HEK293 (cell line): ENCODE measurements at regions of chr5 and their contacts with region 1.

Region 1: DNA sequence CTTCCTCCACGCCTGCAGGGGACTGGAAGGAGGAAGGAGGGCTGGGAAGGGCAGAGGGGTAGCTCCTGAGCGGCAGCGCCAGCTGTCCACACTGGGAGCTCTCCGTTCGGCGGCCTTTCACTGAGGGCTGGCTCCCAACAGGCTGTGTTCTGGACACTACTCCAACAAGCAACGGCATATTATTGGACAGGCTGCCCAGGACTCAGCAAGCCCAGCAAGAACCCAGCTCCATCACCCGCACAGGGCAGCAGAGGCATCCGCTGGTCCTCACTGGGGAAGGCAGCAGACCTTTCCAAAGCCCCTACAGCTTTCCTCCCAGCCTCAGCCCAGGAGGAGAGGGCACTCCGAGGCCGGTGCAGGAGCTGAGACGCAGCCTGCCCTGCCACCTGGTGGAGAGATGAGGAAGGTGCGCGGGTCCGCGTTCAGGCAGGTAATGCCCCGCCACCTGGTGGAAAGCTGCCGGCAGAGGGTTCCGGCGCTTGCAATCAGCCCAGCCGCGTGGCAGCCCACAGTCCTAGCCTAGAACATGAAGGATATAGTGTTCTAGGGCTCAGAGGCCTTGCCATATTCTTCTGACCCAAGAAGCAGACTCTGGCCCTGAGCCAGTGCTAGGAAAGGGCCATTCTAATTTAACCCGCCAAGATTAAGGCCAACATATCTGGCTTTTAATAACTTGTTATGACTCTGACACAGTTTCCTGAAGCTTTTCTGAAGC is 74.4 kb downstream of the NRG2 start:
- H3K4me3 ChIP-seq: no peak overlapping the region
- H3K27ac ChIP-seq: no peak overlapping the region
- H3K4me1 ChIP-seq: no peaks in the 10 kb centered on the region; the same call in 1 of the 2 replicates
- CTCF ChIP-seq: peak; percentile 100

Region 2: DNA sequence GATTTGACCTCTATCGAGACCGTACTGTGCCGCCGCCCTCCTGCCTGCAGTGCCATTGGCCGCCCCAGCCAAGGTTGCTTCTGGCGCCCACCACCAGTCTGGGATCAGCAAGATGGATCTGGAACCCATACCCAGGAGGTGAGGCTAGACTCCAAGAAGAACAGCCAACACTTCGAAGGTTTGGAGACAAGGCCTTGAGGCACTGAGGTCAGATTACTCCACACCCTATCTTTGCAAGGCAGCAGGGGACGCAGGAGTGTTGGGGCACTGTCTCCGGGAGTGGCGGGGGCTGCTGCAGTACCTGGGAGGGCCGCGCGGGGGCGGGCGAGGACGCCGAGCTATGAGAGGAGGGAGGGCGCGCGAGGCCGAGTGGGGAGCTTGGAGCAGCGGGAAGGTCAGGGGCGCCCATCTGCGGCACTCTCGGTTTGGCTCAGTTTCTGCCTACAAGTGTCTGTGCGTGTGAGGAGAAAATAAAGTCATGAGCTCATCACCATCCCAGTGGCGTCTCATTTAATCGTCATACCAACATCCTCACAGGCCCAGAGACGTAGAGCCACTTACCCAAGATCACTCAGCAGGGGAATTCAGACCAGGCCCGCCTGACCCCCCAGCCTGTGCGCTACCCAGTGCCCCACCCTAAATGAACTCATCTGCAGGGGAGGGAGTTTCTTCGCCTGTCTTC is 193.6 kb before region 1 on chr5:
- CTCF ChIA-PET with region 1: interaction called, 63 read pairs
- POLR2A ChIA-PET with region 1: no interaction called
- H3K4me3 ChIP-seq: no peak overlapping the region
- H3K27ac ChIP-seq: no peak overlapping the region
- H3K4me1 ChIP-seq: no peaks in the 10 kb centered on the region
- CTCF ChIP-seq: peak; percentile 84

Region 3: DNA sequence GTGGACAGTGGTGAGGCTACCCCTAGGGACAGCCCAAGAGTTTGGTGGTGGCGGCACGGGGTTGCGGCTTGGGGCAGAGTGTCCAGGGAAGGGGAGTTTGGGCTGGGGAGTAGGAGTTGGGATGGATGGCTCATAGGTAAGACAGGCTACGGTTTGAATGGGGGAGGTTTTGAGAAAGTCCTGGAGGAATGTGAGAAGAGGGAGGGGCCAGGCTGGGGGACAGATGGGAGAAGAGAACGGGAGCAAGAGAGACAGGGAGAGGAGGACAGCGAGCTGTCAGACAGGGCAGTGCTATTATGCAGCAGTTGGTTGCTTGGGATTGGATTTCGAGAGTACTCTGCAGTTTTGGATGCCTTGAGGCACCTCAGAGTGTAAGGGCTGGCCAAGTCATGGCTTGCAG is 148.6 kb before region 1 on chr5:
- CTCF ChIA-PET with region 1: no interaction called
- POLR2A ChIA-PET with region 1: no interaction called
- H3K4me3 ChIP-seq: no peak overlapping the region
- H3K27ac ChIP-seq: no peak overlapping the region
- H3K4me1 ChIP-seq: no peaks in the 10 kb centered on the region
- CTCF ChIP-seq: no peak

Region 4: GRCh38 chr5:139844472-139845145 is 124.1 kb before region 1 on chr5:
- CTCF ChIA-PET with region 1: interaction called, 36 read pairs
- POLR2A ChIA-PET with region 1: no interaction called
- H3K4me3 ChIP-seq: no peak overlapping the region
- H3K27ac ChIP-seq: no peak overlapping the region
- H3K4me1 ChIP-seq: no peaks in the 10 kb centered on the region
- CTCF ChIP-seq: peak; percentile 88

Region 5: DNA sequence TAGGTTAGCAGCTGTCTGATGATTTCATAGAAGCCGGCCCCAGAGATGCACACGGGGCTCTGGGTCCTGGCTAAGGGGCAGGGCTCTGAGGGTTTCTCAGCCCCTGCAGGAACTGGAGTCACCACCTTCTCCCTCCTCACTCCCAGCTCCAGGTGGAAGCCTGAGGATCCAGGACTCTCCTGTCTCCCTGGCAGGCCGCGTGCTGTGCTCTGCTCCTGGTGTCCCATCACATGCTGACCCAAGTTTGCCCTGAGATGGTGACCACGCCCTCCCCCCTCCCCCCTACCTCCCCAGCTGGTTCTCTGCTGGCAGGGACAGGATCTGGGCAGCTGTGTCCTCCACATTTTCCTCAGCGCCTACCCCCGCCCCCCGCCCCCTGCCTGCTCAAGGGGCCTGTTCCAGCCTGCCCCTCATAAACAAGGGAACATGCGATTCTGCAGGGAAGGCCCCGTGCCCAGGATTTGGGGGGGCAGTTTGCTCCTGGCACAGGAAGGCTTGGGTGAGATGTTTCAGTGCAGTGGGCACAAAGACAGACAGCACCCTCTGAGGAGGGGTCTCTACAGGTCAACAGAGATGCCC is 85.7 kb before region 1 on chr5:
- CTCF ChIA-PET with region 1: interaction called, 25 read pairs
- POLR2A ChIA-PET with region 1: no interaction called
- H3K4me3 ChIP-seq: no peak overlapping the region
- H3K27ac ChIP-seq: no peak overlapping the region
- H3K4me1 ChIP-seq: peaks cover 14% of the 10 kb centered on the region
- CTCF ChIP-seq: no peak

Region 6: GRCh38 chr5:139925650-139926640 is 42.8 kb before region 1 on chr5:
- CTCF ChIA-PET with region 1: interaction called, 27 read pairs
- POLR2A ChIA-PET with region 1: no interaction called
- H3K4me3 ChIP-seq: no peak overlapping the region
- H3K27ac ChIP-seq: no peak overlapping the region
- H3K4me1 ChIP-seq: no peaks in the 10 kb centered on the region
- CTCF ChIP-seq: no peak

Region 7: GRCh38 chr5:139994234-139994633 is 25.5 kb after region 1 on chr5:
- CTCF ChIA-PET with region 1: interaction called, 10 read pairs
- POLR2A ChIA-PET with region 1: no interaction called
- H3K4me3 ChIP-seq: no peak overlapping the region
- H3K27ac ChIP-seq: no peak overlapping the region
- H3K4me1 ChIP-seq: 0 out of 2 replicates have a peak, but pooled peaks cover 2% of the 10 kb centered on the region
- CTCF ChIP-seq: no peak

Region 8: GRCh38 chr5:140157032-140157803 is 188.5 kb after region 1 on chr5:
- CTCF ChIA-PET with region 1: interaction called, 15 read pairs
- POLR2A ChIA-PET with region 1: interaction called, 3 read pairs
- H3K4me3 ChIP-seq: peak overlapping the region; percentile 35
- H3K27ac ChIP-seq: peak overlapping the region; percentile 25; the same call in 1 of the 2 replicates
- H3K4me1 ChIP-seq: no peaks in the 10 kb centered on the region
- CTCF ChIP-seq: peak; percentile 78

Region 9: DNA sequence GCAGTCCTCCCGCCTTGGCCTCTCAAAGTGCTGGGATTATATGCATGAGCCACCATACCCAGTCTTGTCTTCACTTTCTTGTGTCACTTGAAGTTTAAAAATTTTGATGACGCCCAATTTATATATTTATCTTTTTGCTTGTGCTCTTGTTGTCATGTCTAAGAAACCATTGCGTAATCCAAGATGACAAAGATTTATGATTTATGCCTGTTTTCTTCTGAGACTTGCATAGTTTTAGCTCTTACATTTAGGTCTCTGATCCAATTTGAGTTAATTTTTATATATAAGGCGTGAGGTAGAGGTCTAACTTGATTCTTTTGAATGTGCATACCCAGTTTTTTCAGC is 451.5 kb after region 1 on chr5:
- CTCF ChIA-PET with region 1: no interaction called
- POLR2A ChIA-PET with region 1: no interaction called
- H3K4me3 ChIP-seq: no peak overlapping the region
- H3K27ac ChIP-seq: no peak overlapping the region
- H3K4me1 ChIP-seq: peaks cover 3% of the 10 kb centered on the region; the same call in 1 of the 2 replicates
- CTCF ChIP-seq: no peak